ENCODE measurements at regions of chr5 and their contacts with region 1.

Region 1: GRCh38 chr5:142356716-142357473 is 32.1 kb upstream of the SPRY4 start:
- DNase-seq: peak; percentile 82
- ATAC-seq: peak; percentile 68
- H3K4me3 ChIP-seq: peak overlapping the region; percentile 75
- H3K27ac ChIP-seq: peak overlapping the region; percentile 63
- H3K4me1 ChIP-seq: peaks cover 23% of the 10 kb centered on the region
- H3K27me3 ChIP-seq: no peaks in the 10 kb centered on the region
- CTCF ChIP-seq: no peak

Region 2: GRCh38 chr5:142375944-142376411 is 19.1 kb after region 1 on chr5:
- CTCF ChIA-PET with region 1: no interaction called
- POLR2A ChIA-PET with region 1: no interaction called
- intact Hi-C with region 1: no loop called
- DNase-seq: no peak
- ATAC-seq: no peak
- H3K4me3 ChIP-seq: no peak overlapping the region
- H3K27ac ChIP-seq: no peak overlapping the region
- H3K4me1 ChIP-seq: no peaks in the 10 kb centered on the region
- H3K27me3 ChIP-seq: no peaks in the 10 kb centered on the region
- CTCF ChIP-seq: no peak

Region 3: GRCh38 chr5:142388696-142389095 is 31.8 kb after region 1 on chr5:
- CTCF ChIA-PET with region 1: no interaction called
- POLR2A ChIA-PET with region 1: interaction called, 4 read pairs
- intact Hi-C with region 1: loop called (anchors 2 kb)
- DNase-seq: peak; percentile 69
- ATAC-seq: peak; percentile 65
- H3K4me3 ChIP-seq: no peak overlapping the region
- H3K27ac ChIP-seq: peak overlapping the region; percentile 74
- H3K4me1 ChIP-seq: peaks cover 24% of the 10 kb centered on the region
- H3K27me3 ChIP-seq: no peaks in the 10 kb centered on the region
- CTCF ChIP-seq: no peak

Region 4: GRCh38 chr5:142472300-142472951 is 115.5 kb after region 1 on chr5:
- CTCF ChIA-PET with region 1: no interaction called
- POLR2A ChIA-PET with region 1: no interaction called
- intact Hi-C with region 1: no loop called
- DNase-seq: peak; percentile 89
- ATAC-seq: peak; percentile 96
- H3K4me3 ChIP-seq: no peak overlapping the region
- H3K27ac ChIP-seq: peak overlapping the region; percentile 79
- H3K4me1 ChIP-seq: peaks cover 27% of the 10 kb centered on the region
- H3K27me3 ChIP-seq: no peaks in the 10 kb centered on the region
- CTCF ChIP-seq: no peak